Heart right ventricle (tissue), 16 donors: ENCODE measurements at regions of chr9 and their contacts with region 1.

Region 1: DNA sequence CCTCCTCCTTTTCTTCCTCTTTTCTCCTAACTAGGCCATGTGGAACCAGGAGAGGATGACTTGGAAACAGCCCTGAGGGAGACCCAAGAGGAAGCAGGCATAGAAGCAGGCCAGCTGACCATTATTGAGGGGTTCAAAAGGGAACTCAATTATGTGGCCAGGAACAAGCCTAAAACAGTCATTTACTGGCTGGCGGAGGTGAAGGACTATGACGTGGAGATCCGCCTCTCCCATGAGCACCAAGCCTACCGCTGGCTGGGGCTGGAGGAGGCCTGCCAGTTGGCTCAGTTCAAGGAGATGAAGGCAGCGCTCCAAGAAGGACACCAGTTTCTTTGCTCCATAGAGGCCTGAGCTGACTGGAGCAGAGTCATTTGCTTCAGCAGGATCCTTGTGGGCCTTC is 13.7 kb downstream of the NUDT2 start:
- DNase-seq: peak; percentile 73 to 74
- ATAC-seq: peak; percentile 76 to 88 (median 83)
- H3K4me3 ChIP-seq: no peak overlapping the region
- H3K27ac ChIP-seq: peak overlapping the region in 9 of 10 donors; percentile 10 to 66 (median 62)
- H3K4me1 ChIP-seq: peaks cover 0 to 54% (median 19%) of the 10 kb centered on the region in 9 donors
- H3K27me3 ChIP-seq: no peaks in the 10 kb centered on the region
- CTCF ChIP-seq: no peak

Region 2: DNA sequence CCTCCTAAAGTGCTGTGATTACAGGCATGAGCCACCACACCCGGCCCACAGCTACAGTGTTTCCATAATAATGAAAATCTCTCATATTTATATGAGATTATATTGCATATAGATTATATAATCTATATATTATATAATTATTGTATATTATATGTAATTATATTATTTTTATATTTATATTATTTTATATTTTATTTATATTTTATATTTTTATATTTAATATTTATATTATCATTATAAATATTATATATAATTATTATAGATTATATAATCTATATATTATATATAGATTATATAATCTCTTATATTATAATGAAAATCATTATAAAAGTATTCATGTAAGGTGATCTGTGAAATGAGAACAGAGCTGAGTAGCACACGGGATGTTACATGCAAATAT is 807.5 kb before region 1 on chr9:
- intact Hi-C with region 1: no loop called
- DNase-seq: no peak
- ATAC-seq: no peak
- H3K4me3 ChIP-seq: no peak overlapping the region
- H3K27ac ChIP-seq: no peak overlapping the region
- H3K4me1 ChIP-seq: no peaks in the 10 kb centered on the region
- H3K27me3 ChIP-seq: peaks cover 0 to 6% (median 0%) of the 10 kb centered on the region in 7 donors
- CTCF ChIP-seq: no peak

Region 3: GRCh38 chr9:34158362-34158869 is 184.7 kb before region 1 on chr9:
- intact Hi-C with region 1: no loop called
- DNase-seq: no peak
- ATAC-seq: no peak
- H3K4me3 ChIP-seq: no peak overlapping the region
- H3K27ac ChIP-seq: no peak overlapping the region
- H3K4me1 ChIP-seq: peaks cover 0 to 2% (median 0%) of the 10 kb centered on the region in 9 donors
- H3K27me3 ChIP-seq: no peaks in the 10 kb centered on the region
- CTCF ChIP-seq: no peak

Region 4: GRCh38 chr9:34603610-34604231 is 260.6 kb after region 1 on chr9:
- intact Hi-C with region 1: loop called in 3 of 10 experiments (anchors 10 kb)
- DNase-seq: peak; percentile 78 to 85
- ATAC-seq: peak; percentile 76 to 91 (median 87)
- H3K4me3 ChIP-seq: no peak overlapping the region
- H3K27ac ChIP-seq: no peak overlapping the region
- H3K4me1 ChIP-seq: no peaks in the 10 kb centered on the region
- H3K27me3 ChIP-seq: no peaks in the 10 kb centered on the region
- CTCF ChIP-seq: peak; percentile 82 to 94 (median 93)